Activated CD4-positive, alpha-beta memory T cell treated with anti-CD3 and anti-CD28 coated beads for 36 hours (primary cell): ENCODE measurements at regions of chr2 and their contacts with region 1.

Region 1: GRCh38 chr2:143730155-143730952 is 601.1 kb downstream of the ARHGAP15 start:
- DNase-seq: peak; percentile 46
- H3K4me3 Mint-ChIP-seq: no peak overlapping the region
- H3K27ac Mint-ChIP-seq: peak overlapping the region; percentile 67
- H3K4me1 Mint-ChIP-seq: peaks cover 61% of the 10 kb centered on the region
- H3K27me3 Mint-ChIP-seq: no peaks in the 10 kb centered on the region

Region 2: DNA sequence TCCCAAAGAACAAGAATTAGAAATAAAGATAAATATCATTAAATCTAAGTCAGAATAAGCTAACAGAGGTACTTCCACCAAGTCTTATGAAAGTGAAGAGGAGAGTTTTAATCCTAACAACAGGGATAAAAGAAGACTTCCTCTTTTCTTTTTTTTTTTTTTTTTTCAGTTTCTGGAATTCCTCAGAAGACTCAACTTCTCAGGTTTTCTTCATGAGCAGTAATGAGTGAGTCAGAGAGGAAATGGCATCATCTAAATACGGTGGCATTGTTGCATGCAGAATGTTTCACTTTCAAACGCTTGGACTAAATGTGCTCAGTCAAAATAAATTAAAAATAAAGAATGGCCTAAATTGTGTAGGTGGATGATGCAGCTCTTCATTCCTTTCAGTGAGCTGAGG is 646.7 kb before region 1 on chr2:
- CTCF ChIA-PET with region 1: no interaction called
- POLR2A ChIA-PET with region 1: no interaction called
- intact Hi-C with region 1: loop called (anchors 10 kb)
- DNase-seq: no peak
- H3K4me3 Mint-ChIP-seq: no peak overlapping the region
- H3K27ac Mint-ChIP-seq: peak overlapping the region; percentile 11
- H3K4me1 Mint-ChIP-seq: peaks cover 29% of the 10 kb centered on the region
- H3K27me3 Mint-ChIP-seq: no peaks in the 10 kb centered on the region

Region 3: DNA sequence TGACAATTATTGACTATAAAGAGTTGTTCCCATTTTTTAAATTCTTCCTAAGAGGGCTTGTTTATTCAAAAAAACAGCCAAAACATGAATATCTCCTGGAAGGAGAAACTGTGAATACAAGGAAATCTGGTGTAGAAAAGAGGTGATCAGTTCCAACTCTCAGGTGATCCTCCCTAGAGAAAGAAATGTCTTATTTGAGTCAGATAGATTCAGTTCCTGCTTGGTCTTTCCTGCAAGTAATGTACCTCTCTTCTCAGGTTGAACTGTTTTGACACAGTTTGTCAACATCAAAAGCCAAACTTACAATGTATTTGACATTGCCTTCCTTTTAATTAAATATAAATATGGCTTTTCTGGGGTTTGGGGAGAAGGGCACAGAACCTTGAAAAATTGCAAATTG is 33.7 kb before region 1 on chr2:
- CTCF ChIA-PET with region 1: interaction called, 4 read pairs
- POLR2A ChIA-PET with region 1: interaction called, 5 read pairs
- intact Hi-C with region 1: loop called (anchors 1 kb)
- DNase-seq: no peak
- H3K4me3 Mint-ChIP-seq: no peak overlapping the region
- H3K27ac Mint-ChIP-seq: no peak overlapping the region
- H3K4me1 Mint-ChIP-seq: peaks cover 70% of the 10 kb centered on the region
- H3K27me3 Mint-ChIP-seq: no peaks in the 10 kb centered on the region

Region 4: GRCh38 chr2:143705108-143705686 is 25.2 kb before region 1 on chr2:
- CTCF ChIA-PET with region 1: interaction called, 3 read pairs
- POLR2A ChIA-PET with region 1: interaction called, 7 read pairs
- intact Hi-C with region 1: loop called (anchors 1 kb)
- DNase-seq: no peak
- H3K4me3 Mint-ChIP-seq: no peak overlapping the region
- H3K27ac Mint-ChIP-seq: peak overlapping the region; percentile 68
- H3K4me1 Mint-ChIP-seq: peaks cover 41% of the 10 kb centered on the region
- H3K27me3 Mint-ChIP-seq: no peaks in the 10 kb centered on the region

Region 5: GRCh38 chr2:143802871-143803650 is 72.7 kb after region 1 on chr2:
- CTCF ChIA-PET with region 1: no interaction called
- POLR2A ChIA-PET with region 1: interaction called, 6 read pairs
- intact Hi-C with region 1: loop called (anchors 1 kb)
- DNase-seq: no peak
- H3K4me3 Mint-ChIP-seq: peak overlapping the region; percentile 27
- H3K27ac Mint-ChIP-seq: peak overlapping the region; percentile 73
- H3K4me1 Mint-ChIP-seq: peaks cover 17% of the 10 kb centered on the region
- H3K27me3 Mint-ChIP-seq: peaks cover 7% of the 10 kb centered on the region

Region 6: GRCh38 chr2:144645083-144645778 is 914.9 kb after region 1 on chr2:
- CTCF ChIA-PET with region 1: no interaction called
- POLR2A ChIA-PET with region 1: no interaction called
- intact Hi-C with region 1: loop called (anchors 2 kb)
- DNase-seq: no peak
- H3K4me3 Mint-ChIP-seq: no peak overlapping the region
- H3K27ac Mint-ChIP-seq: no peak overlapping the region
- H3K4me1 Mint-ChIP-seq: no peaks in the 10 kb centered on the region
- H3K27me3 Mint-ChIP-seq: peaks cover 3% of the 10 kb centered on the region